GM12878 (cell line): ENCODE measurements at regions of chr7 and their contacts with region 1.

Region 1: DNA sequence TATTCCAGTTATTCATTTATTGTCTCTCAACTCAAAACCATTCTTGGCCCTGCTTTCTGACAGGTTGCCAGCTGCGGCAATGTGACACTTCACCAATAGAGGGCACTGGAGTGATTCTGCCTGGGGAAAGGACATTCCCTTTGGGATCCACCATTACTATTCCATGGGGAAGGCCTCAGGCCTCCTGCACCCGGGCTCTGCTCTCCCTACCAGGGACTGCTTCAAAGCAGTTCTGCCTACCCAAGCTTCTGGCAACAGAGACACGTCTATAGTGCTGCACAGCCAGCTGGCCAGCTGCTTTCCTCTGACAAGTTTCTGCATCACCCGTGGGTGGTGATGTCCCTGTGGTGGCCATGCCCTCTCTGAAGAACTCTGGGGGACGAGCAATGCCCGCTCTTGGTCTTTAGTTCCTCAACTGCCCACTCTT is 163.8 kb downstream of the ELMO1 start:
- DNase-seq: peak; percentile 9
- ATAC-seq: peak; percentile 70
- H3K4me3 ChIP-seq: no peak overlapping the region
- H3K27ac ChIP-seq: no peak overlapping the region
- H3K4me1 ChIP-seq: peaks cover 11% of the 10 kb centered on the region
- H3K27me3 ChIP-seq: no peaks in the 10 kb centered on the region
- CTCF ChIP-seq: peak; percentile 87 to 92 (median 87)
- EP300 ChIP-seq: no peak
- POLR2A ChIP-seq: no peak
- RAD21 ChIP-seq: peak; percentile 86

Region 2: GRCh38 chr7:37208528-37208927 is 76.3 kb before region 1 on chr7:
- CTCF ChIA-PET with region 1: interaction called, 15 read pairs
- POLR2A ChIA-PET with region 1: no interaction called
- RAD21 ChIA-PET with region 1: interaction called, 3 read pairs
- SMC1A ChIA-PET with region 1: interaction called, 15 read pairs
- in situ Hi-C with region 1: no loop called
- intact Hi-C with region 1: no loop called
- DNase-seq: peak; percentile 26
- ATAC-seq: peak; percentile 92
- H3K4me3 ChIP-seq: no peak overlapping the region
- H3K27ac ChIP-seq: no peak overlapping the region
- H3K4me1 ChIP-seq: peaks cover 19% of the 10 kb centered on the region
- H3K27me3 ChIP-seq: no peaks in the 10 kb centered on the region; a peak in 1 of 4 replicates
- CTCF ChIP-seq: peak; percentile 60 to 90 (median 69); a peak in 5 of 6 replicates
- EP300 ChIP-seq: no peak
- POLR2A ChIP-seq: no peak
- RAD21 ChIP-seq: peak; percentile 87

Region 3: DNA sequence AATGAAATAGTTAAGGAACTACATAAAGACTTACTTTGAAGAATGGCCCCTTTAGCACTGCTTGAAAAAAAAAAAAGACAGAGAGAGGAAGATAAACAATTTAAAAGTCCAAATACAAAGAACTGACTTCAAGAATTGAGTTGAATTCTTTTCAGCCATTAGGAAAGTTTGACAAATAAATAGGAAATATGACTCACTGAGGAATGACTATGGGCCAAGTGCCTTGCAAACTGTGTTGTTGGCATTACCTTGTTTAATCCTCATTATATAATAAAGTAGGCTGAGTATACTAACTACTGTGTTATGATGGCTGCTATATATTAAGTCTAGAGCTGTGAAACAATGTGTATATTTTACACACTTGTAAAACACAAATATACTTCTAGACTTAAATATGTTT is 12.7 kb after region 1 on chr7:
- CTCF ChIA-PET with region 1: interaction called, 15 read pairs
- POLR2A ChIA-PET with region 1: interaction called, 3 read pairs
- RAD21 ChIA-PET with region 1: interaction called, 7 read pairs
- SMC1A ChIA-PET with region 1: interaction called, 6 read pairs
- in situ Hi-C with region 1: no loop called
- intact Hi-C with region 1: no loop called
- DNase-seq: no peak
- ATAC-seq: no peak
- H3K4me3 ChIP-seq: no peak overlapping the region
- H3K27ac ChIP-seq: no peak overlapping the region
- H3K4me1 ChIP-seq: no peaks in the 10 kb centered on the region
- H3K27me3 ChIP-seq: no peaks in the 10 kb centered on the region
- CTCF ChIP-seq: no peak
- EP300 ChIP-seq: no peak
- POLR2A ChIP-seq: no peak
- RAD21 ChIP-seq: no peak

Region 4: GRCh38 chr7:37342688-37343471 is 58.1 kb after region 1 on chr7:
- CTCF ChIA-PET with region 1: interaction called, 298 read pairs
- POLR2A ChIA-PET with region 1: no interaction called
- RAD21 ChIA-PET with region 1: interaction called, 12 read pairs
- SMC1A ChIA-PET with region 1: interaction called, 106 read pairs
- in situ Hi-C with region 1: loop called (anchors 5 kb)
- intact Hi-C with region 1: loop called (anchors 2 kb)
- DNase-seq: peak; percentile 69
- ATAC-seq: peak; percentile 70
- H3K4me3 ChIP-seq: peak overlapping the region; percentile 69
- H3K27ac ChIP-seq: peak overlapping the region; percentile 85
- H3K4me1 ChIP-seq: peaks cover 31% of the 10 kb centered on the region
- H3K27me3 ChIP-seq: no peaks in the 10 kb centered on the region
- CTCF ChIP-seq: peak; percentile 19 to 58 (median 41); a peak in 5 of 6 replicates
- EP300 ChIP-seq: no peak
- POLR2A ChIP-seq: peak; percentile 58; the same call in 1 of the 2 replicates
- RAD21 ChIP-seq: peak; percentile 57

Region 5: DNA sequence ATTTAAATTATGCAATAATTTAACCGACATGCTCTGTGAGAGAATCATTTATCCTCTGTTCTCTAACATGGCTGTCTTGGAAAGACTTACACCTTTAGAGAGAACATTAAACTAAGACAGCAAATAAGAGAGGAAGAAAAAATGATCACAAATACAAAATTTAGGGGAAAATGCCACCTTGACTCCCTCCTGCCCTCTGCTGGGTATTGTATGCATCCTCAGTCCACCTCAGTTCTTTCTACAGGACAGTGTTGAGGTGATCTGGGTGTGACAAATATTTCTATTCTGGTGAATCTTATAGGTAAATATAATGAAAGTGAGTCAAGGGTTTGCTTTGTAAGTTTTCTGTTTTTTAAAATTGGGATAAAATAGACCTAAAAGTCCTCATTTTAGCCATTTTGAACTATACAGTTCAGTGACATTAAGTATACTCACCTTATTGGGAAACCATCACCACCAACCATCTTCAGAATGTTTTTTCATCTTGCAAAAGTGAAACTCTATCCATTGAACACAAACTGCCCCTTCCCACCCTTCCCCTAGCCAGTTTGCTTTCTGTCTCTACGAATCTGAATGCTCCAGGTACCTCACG is 225.3 kb after region 1 on chr7:
- CTCF ChIA-PET with region 1: interaction called, 5 read pairs
- POLR2A ChIA-PET with region 1: no interaction called
- RAD21 ChIA-PET with region 1: interaction called, 3 read pairs
- SMC1A ChIA-PET with region 1: interaction called, 10 read pairs
- in situ Hi-C with region 1: no loop called
- intact Hi-C with region 1: no loop called
- DNase-seq: no peak
- ATAC-seq: peak; percentile 80
- H3K4me3 ChIP-seq: no peak overlapping the region
- H3K27ac ChIP-seq: no peak overlapping the region
- H3K4me1 ChIP-seq: no peaks in the 10 kb centered on the region
- H3K27me3 ChIP-seq: peaks cover 0 to 4% of the 10 kb centered on the region in 2 experiments; a peak in 2 of 4 replicates
- CTCF ChIP-seq: peak; percentile 59 to 77 (median 76)
- EP300 ChIP-seq: no peak
- POLR2A ChIP-seq: no peak
- RAD21 ChIP-seq: peak; percentile 71